ENCODE measurements at regions of chr14 and their contacts with region 1.

Region 1: GRCh38 chr14:105086833-105087307 is 21.6 kb upstream of the GPR132 start:
- DNase-seq: peak; percentile 84 to 91
- ATAC-seq: peak; percentile 90 to 94 (median 92)
- H3K4me3 ChIP-seq: peak overlapping the region; percentile 56
- H3K4me3 Mint-ChIP-seq: peak overlapping the region; percentile 82
- H3K27ac ChIP-seq: peak overlapping the region; percentile 58
- H3K27ac Mint-ChIP-seq: peak overlapping the region; percentile 45 to 81
- H3K4me1 ChIP-seq: peaks cover 42% of the 10 kb centered on the region
- H3K4me1 Mint-ChIP-seq: peaks cover 7 to 45% of the 10 kb centered on the region in 2 donors
- H3K27me3 ChIP-seq: peaks cover 4% of the 10 kb centered on the region
- H3K27me3 Mint-ChIP-seq: peaks cover 0 to 6% of the 10 kb centered on the region in 2 donors
- CTCF ChIP-seq: peak; percentile 76

Region 2: DNA sequence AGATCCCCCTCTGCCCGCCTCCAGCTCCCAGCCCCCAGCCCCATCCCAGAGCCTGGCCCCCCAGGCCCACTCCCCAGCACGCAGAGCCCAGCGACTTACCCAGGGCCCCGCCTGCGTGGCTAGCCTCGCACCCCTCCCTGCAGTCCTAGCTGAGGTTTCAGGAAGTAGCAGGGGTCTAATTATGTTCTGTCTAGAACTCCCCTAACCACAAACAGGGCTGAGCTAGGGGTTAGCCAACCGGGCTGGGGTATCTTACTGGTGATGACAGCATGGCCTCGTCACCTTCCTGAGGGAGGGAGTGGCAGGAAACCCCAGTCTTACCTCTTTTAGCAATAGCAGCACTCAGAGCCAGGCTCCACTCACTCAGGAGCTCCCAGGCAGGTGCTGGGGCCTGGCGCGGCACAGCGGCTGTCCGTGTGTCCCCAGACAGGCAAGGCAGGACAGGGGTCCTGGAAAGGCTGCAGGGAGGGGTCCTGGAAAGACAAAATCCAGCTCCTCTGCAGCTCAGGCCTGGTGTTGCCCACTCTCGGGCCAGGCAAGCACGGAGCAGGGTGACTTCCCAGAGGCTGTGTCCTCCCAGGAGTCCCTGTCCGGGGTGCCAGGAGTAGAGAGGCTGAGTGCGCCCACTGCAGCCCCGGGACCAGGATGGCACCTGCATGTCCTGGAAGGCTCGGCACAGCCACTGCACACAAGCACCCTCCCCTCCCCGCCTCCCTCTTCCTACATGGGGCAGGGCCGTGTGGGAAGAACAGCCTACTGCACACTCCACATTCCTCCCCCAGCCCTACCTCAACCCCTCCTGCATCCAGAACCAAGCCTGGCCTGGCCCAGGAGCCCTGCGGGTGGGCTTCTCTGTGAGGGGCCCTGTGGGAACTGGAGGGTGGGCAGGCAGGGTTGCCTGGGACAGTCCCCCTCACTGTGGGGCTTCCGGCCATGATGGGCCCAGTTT is 21.3 kb before region 1 on chr14 and contains the start of gene GPR132:
- intact Hi-C with region 1: loop called (anchors 2 kb)
- DNase-seq: peak; percentile 82 to 97
- ATAC-seq: peak; percentile 87 to 95 (median 91)
- H3K4me3 ChIP-seq: peak within 1 kb of the TSS; percentile 79
- H3K4me3 Mint-ChIP-seq: peak within 1 kb of the TSS; percentile 94
- H3K27ac ChIP-seq: peak within 1 kb of the TSS; percentile 99
- H3K27ac Mint-ChIP-seq: peak within 1 kb of the TSS; percentile 96
- H3K4me1 ChIP-seq: peaks cover 92% of the 10 kb centered on the region
- H3K4me1 Mint-ChIP-seq: peaks cover 40 to 69% of the 10 kb centered on the region in 2 donors
- H3K27me3 ChIP-seq: no peaks in the 10 kb centered on the region
- H3K27me3 Mint-ChIP-seq: no peaks in the 10 kb centered on the region
- CTCF ChIP-seq: no peak
- total RNA-seq, gene GPR132: 18.2 to 30.3 (median 26.7) TPM

Region 3: GRCh38 chr14:105168979-105169507 is 82.2 kb after region 1 on chr14:
- intact Hi-C with region 1: loop called (anchors 5 kb)
- DNase-seq: peak; percentile 40 to 63
- ATAC-seq: peak; percentile 56 to 73 (median 70)
- H3K4me3 ChIP-seq: no peak overlapping the region
- H3K4me3 Mint-ChIP-seq: peak overlapping the region; percentile 70
- H3K27ac ChIP-seq: no peak overlapping the region
- H3K27ac Mint-ChIP-seq: peak overlapping the region in 1 of 2 donors; percentile 29
- H3K4me1 ChIP-seq: peaks cover 33% of the 10 kb centered on the region
- H3K4me1 Mint-ChIP-seq: peaks cover 4 to 21% of the 10 kb centered on the region in 2 donors
- H3K27me3 ChIP-seq: peaks cover 23% of the 10 kb centered on the region
- H3K27me3 Mint-ChIP-seq: peaks cover 0 to 19% of the 10 kb centered on the region in 2 donors
- CTCF ChIP-seq: peak; percentile 58

Region 4: DNA sequence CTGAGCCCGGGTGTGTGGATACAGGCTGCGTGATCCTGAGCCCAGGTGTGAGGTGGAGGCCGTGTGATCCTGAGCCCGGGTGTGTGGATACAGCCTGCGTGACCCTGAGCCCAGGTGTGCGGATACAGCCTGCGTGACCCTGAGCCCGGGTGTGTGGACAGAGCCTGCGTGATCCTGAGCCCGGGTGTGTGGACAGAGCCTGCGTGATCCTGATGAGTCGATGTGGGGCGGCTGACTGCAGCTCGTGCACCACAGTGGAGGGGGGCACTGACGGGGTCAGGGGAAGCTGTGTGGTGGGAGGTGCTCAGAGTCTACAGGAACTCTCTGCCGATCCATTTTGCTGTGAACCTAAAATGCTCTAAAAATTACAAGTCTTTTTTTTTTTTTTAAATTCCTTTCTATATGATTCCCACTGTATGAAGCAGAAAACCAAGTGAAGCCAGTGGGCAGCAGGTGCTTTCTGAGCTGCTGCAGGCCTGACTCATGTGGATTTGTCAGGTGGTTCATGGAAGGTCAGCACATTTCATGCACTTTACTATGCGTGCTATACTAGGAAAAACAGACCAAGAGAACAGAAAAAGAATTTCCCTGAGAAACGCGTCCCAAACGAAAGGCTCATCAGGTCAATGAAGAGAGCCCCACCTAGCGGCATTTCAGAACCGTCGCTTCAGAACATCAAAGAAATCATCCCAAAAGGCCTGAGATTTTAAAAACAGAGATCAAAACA is 194.7 kb after region 1 on chr14:
- intact Hi-C with region 1: loop called (anchors 2 kb)
- DNase-seq: peak in 1 of 2 donors; percentile 69
- ATAC-seq: peak in 1 of 3 donors; percentile 46
- H3K4me3 ChIP-seq: no peak overlapping the region
- H3K4me3 Mint-ChIP-seq: no peak overlapping the region
- H3K27ac ChIP-seq: no peak overlapping the region
- H3K27ac Mint-ChIP-seq: peak overlapping the region in 1 of 2 donors; percentile 34
- H3K4me1 ChIP-seq: peaks cover 23% of the 10 kb centered on the region
- H3K4me1 Mint-ChIP-seq: peaks cover 26 to 37% of the 10 kb centered on the region in 2 donors
- H3K27me3 ChIP-seq: no peaks in the 10 kb centered on the region
- H3K27me3 Mint-ChIP-seq: no peaks in the 10 kb centered on the region
- CTCF ChIP-seq: peak; percentile 35

Region 5: DNA sequence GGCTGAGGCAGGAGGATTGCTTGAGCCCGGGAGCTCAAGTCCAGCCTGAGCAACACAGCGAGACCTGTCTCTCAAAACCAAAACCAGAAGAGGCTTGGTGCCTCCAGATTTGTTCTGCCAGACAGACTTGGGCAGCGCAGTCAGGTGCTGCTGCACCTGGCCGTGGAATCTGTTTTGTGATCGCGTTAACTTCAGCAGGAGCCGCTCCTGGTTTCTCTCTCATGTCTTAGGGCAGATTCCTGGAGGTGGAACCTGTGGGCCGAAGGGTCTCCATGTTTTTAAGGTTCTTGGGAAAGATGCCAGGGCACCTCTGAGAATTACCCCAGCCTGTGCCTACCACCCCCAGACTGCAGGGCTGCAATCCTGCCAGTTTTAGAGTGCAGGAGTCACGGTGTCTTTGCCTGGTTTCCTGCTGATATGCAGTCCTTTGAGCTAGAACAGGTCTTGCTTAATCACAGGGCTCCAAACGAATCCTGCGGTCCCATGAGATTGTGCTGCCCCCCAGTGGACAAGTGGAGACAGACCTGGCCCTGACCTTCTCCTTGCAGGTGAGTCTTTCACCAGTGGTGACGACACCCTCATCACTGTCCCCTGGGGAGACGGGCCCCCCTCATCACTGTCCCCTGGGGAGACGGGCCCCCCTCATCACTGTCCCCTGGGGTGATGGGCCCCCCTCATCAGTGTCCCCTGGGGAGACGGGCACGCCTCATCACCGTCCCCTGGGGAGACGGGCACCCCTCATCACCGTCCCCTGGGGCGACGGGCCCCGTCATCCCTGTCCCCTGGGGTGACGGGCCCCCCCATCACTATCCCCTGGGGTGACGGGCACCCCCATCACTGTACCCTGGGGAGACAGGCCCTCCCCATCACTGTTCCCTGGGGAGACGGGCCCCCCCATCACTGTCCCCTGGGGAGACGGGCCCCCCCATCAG is 265.3 kb after region 1 on chr14:
- intact Hi-C with region 1: loop called (anchors 1 kb)
- DNase-seq: peak; percentile 79 to 93
- ATAC-seq: peak; percentile 89 to 99 (median 97)
- H3K4me3 ChIP-seq: no peak overlapping the region
- H3K4me3 Mint-ChIP-seq: no peak overlapping the region
- H3K27ac ChIP-seq: no peak overlapping the region
- H3K27ac Mint-ChIP-seq: no peak overlapping the region
- H3K4me1 ChIP-seq: peaks cover 4% of the 10 kb centered on the region
- H3K4me1 Mint-ChIP-seq: peaks cover 0 to 4% of the 10 kb centered on the region in 2 donors
- H3K27me3 ChIP-seq: no peaks in the 10 kb centered on the region
- H3K27me3 Mint-ChIP-seq: no peaks in the 10 kb centered on the region
- CTCF ChIP-seq: peak; percentile 80